PC-9 (cell line): ENCODE measurements at regions of chr20 and their contacts with region 1.

Region 1: DNA sequence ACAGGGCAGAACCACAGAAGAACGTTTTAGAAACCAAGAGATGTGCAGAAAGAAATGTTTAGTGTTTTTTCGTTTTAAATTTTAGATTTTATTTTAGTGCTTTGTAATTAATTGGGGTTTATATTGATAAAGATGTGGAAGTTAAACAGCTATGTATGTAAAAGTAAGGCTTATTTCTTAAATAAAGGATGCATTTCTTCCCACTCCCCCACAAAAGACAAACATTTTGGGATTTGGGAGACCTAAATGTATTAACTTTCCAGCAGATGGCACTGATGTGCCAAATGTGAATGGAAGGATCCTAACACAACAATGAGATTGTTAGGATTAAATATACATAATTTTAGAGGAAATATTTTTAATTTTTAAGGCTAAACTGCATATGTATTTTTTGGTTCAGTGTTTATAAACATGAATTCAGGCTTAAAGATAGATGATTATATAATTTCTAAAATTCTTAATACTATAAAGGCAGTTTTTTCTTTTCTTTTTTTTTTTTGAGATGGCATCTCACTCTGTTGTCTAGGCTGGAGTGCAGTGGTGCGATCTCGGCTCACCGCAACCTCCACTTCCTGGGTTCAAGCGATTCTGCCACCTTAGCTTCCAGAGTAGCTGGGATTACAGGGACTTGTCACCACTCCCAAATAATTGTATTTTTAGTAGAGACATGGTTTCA is 12.0 kb downstream of the PFDN4 start:
- DNase-seq: peak; percentile 12 to 48
- H3K4me3 ChIP-seq: no peak overlapping the region
- H3K27ac ChIP-seq: no peak overlapping the region
- H3K4me1 ChIP-seq: peaks cover 9% of the 10 kb centered on the region
- H3K27me3 ChIP-seq: no peaks in the 10 kb centered on the region
- CTCF ChIP-seq: peak; percentile 92

Region 2: DNA sequence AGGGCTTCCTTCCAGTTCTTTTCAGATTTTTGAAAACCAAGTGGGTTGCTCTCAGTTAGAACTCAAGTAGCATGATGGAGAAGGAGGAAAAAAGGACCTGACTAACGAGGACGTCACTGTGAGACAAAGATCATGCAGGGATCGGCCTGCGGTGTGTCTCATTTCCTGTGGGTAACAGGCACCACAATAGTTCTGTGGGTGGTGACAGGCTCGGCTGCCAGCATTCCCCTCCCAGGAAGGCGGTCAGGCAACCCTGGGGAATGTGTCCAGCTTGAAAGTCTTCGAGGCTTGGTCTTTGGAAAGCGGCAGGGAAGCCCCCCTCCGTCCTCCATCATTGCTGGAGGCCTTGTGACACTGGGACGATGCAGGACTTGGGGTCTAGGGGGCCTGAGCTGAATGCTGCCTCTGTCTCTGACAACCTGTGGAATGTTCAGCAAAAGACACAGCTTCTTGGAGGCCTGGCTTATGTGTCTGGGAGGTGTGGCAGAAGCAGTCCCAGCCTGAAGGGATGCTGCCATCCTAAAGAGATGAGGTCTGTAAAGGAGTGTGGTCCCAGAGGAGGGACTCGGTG is 270.5 kb before region 1 on chr20:
- CTCF ChIA-PET with region 1: no interaction called
- POLR2A ChIA-PET with region 1: no interaction called
- intact Hi-C with region 1: no loop called
- DNase-seq: peak in 1 of 2 experiments; percentile 61
- H3K4me3 ChIP-seq: no peak overlapping the region
- H3K27ac ChIP-seq: no peak overlapping the region
- H3K4me1 ChIP-seq: no peaks in the 10 kb centered on the region
- H3K27me3 ChIP-seq: no peaks in the 10 kb centered on the region
- CTCF ChIP-seq: no peak

Region 3: GRCh38 chr20:54382422-54382821 is 162.5 kb after region 1 on chr20:
- CTCF ChIA-PET with region 1: no interaction called
- POLR2A ChIA-PET with region 1: no interaction called
- intact Hi-C with region 1: loop called (anchors 10 kb)
- DNase-seq: peak; percentile 4 to 61
- H3K4me3 ChIP-seq: no peak overlapping the region
- H3K27ac ChIP-seq: no peak overlapping the region
- H3K4me1 ChIP-seq: peaks cover 3% of the 10 kb centered on the region; the same call in 1 of the 2 replicates
- H3K27me3 ChIP-seq: no peaks in the 10 kb centered on the region
- CTCF ChIP-seq: no peak

Region 4: GRCh38 chr20:54475334-54476168 is 255.7 kb after region 1 on chr20 and contains the start of gene DOK5:
- CTCF ChIA-PET with region 1: no interaction called
- POLR2A ChIA-PET with region 1: no interaction called
- intact Hi-C with region 1: loop called (anchors 10 kb)
- DNase-seq: no peak
- H3K4me3 ChIP-seq: no peak within 1 kb of the TSS
- H3K27ac ChIP-seq: no peak within 1 kb of the TSS
- H3K4me1 ChIP-seq: no peaks in the 10 kb centered on the region
- H3K27me3 ChIP-seq: peaks cover 18% of the 10 kb centered on the region
- CTCF ChIP-seq: no peak
- total RNA-seq, gene DOK5: not detected in 2 replicates

Region 5: DNA sequence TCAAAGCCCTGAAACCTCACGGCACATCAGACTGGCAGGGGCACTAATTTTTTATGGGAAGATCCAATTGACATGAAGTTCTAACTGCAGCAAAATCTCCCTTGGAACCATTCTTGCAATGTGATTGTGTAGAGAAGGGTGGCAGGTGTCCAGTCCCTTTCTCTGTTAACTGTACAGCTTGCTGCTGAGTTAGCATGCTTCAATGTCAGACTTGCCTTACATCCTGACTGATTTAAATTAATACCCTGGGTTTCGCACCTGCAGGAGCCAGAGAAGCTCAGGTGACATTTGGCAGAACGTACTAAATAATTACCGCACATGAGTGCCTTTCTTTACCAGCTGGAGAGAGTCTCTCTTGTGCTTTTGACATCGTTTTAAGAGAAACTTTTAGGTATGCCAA is 378.5 kb after region 1 on chr20:
- CTCF ChIA-PET with region 1: no interaction called
- POLR2A ChIA-PET with region 1: no interaction called
- intact Hi-C with region 1: loop called (anchors 5 kb)
- DNase-seq: no peak
- H3K4me3 ChIP-seq: no peak overlapping the region
- H3K27ac ChIP-seq: no peak overlapping the region
- H3K4me1 ChIP-seq: no peaks in the 10 kb centered on the region
- H3K27me3 ChIP-seq: peaks cover 27% of the 10 kb centered on the region
- CTCF ChIP-seq: no peak

Region 6: DNA sequence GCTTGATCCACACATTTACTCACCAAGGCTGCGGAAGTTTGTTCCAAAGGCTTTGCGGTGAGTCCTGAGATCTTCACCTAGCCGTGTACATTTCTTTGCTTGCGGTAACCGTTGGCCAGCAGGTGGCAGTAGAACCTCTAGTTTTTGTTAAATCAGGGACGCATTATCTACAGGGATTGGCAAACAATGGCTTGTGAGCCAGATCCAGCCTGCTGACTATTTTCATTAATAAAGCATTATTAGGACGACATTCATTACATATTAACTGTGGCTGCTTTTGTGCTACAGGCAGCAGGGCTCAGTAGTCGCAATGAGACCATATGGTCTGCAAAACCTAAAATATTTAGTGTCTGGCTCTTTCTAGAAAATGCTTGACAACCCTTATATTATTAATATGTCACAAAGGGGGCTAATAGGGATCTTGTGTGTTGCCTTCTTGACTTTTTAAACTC is 429.6 kb after region 1 on chr20:
- CTCF ChIA-PET with region 1: interaction called, 4 read pairs
- POLR2A ChIA-PET with region 1: no interaction called
- intact Hi-C with region 1: loop called (anchors 1 kb)
- DNase-seq: peak; percentile 52 to 64
- H3K4me3 ChIP-seq: no peak overlapping the region
- H3K27ac ChIP-seq: no peak overlapping the region
- H3K4me1 ChIP-seq: no peaks in the 10 kb centered on the region
- H3K27me3 ChIP-seq: peaks cover 40% of the 10 kb centered on the region
- CTCF ChIP-seq: peak; percentile 90